ENCODE measurements at regions of chr13 and their contacts with region 1.

Region 1: GRCh38 chr13:51814825-51815650 is 11.1 kb upstream of the DHRS12 start:
- DNase-seq: peak; percentile 55 to 81 (median 73)
- H3K4me3 ChIP-seq: peak overlapping the region; percentile 30
- H3K4me3 Mint-ChIP-seq: peak overlapping the region in 6 of 7 donors; percentile 14 to 73 (median 63)
- H3K27ac ChIP-seq: no peak overlapping the region
- H3K27ac Mint-ChIP-seq: peak overlapping the region; percentile 60 to 94 (median 86)
- H3K4me1 ChIP-seq: peaks cover 62% of the 10 kb centered on the region
- H3K4me1 Mint-ChIP-seq: peaks cover 42 to 56% (median 48%) of the 10 kb centered on the region in 3 donors
- H3K27me3 ChIP-seq: no peaks in the 10 kb centered on the region
- H3K27me3 Mint-ChIP-seq: peaks cover 0 to 3% of the 10 kb centered on the region in 2 donors

Region 2: DNA sequence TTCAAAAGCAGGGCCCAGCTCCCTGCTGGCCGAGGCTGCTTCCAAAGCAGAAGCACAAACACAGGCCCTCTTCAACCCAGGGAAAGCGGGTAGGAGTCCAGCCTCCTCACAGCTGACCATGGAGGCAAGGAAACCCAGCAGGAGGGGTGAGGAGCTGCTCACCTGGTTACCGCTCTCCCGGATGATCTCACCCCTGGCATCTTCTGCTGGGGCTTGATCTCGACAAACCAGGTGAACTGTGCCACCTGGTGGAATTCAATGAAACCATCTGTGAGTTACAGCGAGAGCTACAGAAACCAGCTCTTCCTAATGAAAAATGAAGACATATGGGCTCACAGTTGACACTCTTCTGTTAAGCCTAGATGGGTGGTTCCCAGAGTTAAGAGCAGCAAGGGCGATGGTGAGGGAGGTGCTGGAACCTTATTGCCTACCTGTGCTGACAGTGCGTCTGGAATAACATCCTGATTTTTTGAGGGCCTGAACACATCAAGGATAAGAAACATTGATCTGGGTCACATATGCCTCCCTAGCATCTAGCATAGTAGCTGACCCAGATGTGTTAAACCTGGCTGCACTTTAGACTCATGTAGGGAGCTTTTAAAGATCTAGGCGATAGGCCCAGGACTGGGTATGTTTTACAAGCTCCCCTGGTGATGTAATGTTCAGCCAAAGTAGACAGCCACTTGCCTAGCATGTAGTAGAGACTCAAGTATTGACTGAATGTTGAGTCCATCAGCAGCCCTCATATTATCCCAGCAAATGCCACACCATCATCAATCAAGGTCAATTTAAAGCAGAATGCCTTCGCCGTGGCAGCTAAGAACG is 17.2 kb before region 1 on chr13:
- CTCF ChIA-PET with region 1: interaction called, 17 read pairs
- POLR2A ChIA-PET with region 1: interaction called, 3 read pairs
- DNase-seq: peak; percentile 29 to 71 (median 49)
- H3K4me3 ChIP-seq: no peak overlapping the region
- H3K4me3 Mint-ChIP-seq: peak overlapping the region in 1 of 7 donors; percentile 58
- H3K27ac ChIP-seq: no peak overlapping the region
- H3K27ac Mint-ChIP-seq: peak overlapping the region in 7 of 8 donors; percentile 34 to 99 (median 86)
- H3K4me1 ChIP-seq: peaks cover 16% of the 10 kb centered on the region
- H3K4me1 Mint-ChIP-seq: peaks cover 17 to 40% (median 20%) of the 10 kb centered on the region in 3 donors
- H3K27me3 ChIP-seq: no peaks in the 10 kb centered on the region
- H3K27me3 Mint-ChIP-seq: no peaks in the 10 kb centered on the region

Region 3: DNA sequence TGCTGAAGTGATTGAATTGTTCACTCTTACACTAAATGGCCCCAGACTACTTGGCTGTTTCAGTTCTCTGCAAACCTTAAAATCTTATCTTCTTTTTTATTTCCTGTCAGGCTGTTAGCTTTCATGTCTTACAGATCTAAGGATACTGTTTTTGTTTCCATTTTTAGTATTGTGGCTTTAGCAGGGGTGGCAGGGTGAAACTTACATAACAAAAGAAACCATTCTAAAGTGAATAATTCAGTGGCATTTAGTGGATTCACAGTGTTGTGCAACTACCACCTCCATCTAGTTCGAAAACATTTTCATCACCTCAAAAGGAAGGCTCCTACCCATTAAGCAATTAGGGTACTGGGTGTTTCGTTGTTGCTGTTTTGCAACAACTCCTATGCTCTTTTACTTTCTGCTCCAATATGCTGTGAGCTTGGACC is 10.1 kb after region 1 on chr13:
- CTCF ChIA-PET with region 1: interaction called, 109 read pairs
- POLR2A ChIA-PET with region 1: interaction called, 8 read pairs
- DNase-seq: peak in 2 of 5 donors; percentile 71 to 82
- H3K4me3 ChIP-seq: peak overlapping the region; percentile 78
- H3K4me3 Mint-ChIP-seq: peak overlapping the region; percentile 68 to 92 (median 86)
- H3K27ac ChIP-seq: no peak overlapping the region
- H3K27ac Mint-ChIP-seq: peak overlapping the region; percentile 90 to 97 (median 94)
- H3K4me1 ChIP-seq: peaks cover 96% of the 10 kb centered on the region
- H3K4me1 Mint-ChIP-seq: peaks cover 78 to 93% (median 91%) of the 10 kb centered on the region in 3 donors
- H3K27me3 ChIP-seq: no peaks in the 10 kb centered on the region
- H3K27me3 Mint-ChIP-seq: no peaks in the 10 kb centered on the region

Region 4: GRCh38 chr13:51844862-51845573 is 30.0 kb after region 1 on chr13 and contains the start of gene TMEM272:
- CTCF ChIA-PET with region 1: interaction called, 188 read pairs
- POLR2A ChIA-PET with region 1: no interaction called
- DNase-seq: peak; percentile 18 to 62 (median 38)
- H3K4me3 ChIP-seq: no peak within 1 kb of the TSS
- H3K4me3 Mint-ChIP-seq: peak within 1 kb of the TSS in 3 of 7 donors; percentile 7 to 63 (median 35)
- H3K27ac ChIP-seq: no peak within 1 kb of the TSS
- H3K27ac Mint-ChIP-seq: peak within 1 kb of the TSS in 1 of 8 donors; percentile 48
- H3K4me1 ChIP-seq: peaks cover 5% of the 10 kb centered on the region
- H3K4me1 Mint-ChIP-seq: peaks cover 4 to 13% (median 6%) of the 10 kb centered on the region in 3 donors
- H3K27me3 ChIP-seq: no peaks in the 10 kb centered on the region
- H3K27me3 Mint-ChIP-seq: peaks cover 2 to 15% of the 10 kb centered on the region in 2 donors
- total RNA-seq, gene TMEM272: 0.35 to 0.69 TPM

Measured in CD8-positive, alpha-beta memory T cell (primary cell).